ENCODE measurements at regions of chrX and their contacts with region 1.

Region 1: DNA sequence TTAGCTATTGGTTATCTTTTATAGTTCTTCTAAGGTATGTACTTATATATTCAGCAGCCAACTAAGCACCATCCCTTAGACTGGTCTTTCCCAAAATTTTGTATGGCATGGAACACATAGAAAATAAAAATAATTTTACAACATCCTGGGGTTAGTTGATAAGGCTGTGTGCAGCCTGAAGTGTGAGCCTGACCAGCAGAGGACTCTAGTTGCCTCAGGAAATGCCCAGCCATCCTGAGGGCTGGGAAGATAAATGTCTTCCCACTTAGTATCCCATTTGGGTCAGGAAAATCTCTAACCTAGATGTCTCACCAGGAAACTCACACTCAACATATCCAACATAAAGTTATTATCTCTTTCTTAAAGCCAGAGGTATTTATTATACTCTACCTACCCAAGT is 251.4 kb upstream of the POF1B start:
- DNase-seq: no peak
- H3K4me3 ChIP-seq: no peak overlapping the region
- H3K27ac ChIP-seq: no peak overlapping the region
- H3K4me1 ChIP-seq: no peaks in the 10 kb centered on the region
- H3K27me3 ChIP-seq: no peaks in the 10 kb centered on the region
- CTCF ChIP-seq: no peak

Region 2: DNA sequence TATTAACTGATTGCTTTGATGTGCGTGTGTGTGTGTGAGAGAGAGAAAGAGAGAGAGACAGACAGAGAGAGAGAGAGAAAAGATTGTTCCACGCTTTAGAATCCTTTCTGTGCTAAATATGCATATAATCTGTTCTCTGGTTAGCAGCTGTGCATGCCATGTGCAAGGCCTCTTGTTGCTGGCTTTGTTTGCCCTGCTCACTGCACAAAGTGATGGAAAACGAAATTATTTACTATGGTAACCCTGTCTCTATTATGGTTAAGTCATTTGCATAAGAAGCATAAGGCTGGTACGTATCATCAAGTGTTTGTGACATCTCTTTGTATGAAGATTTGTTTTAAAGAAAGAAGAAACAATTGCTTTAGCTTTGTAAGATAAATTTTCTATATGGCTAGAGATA is 61.2 kb before region 1 on chrX:
- intact Hi-C with region 1: loop called (anchors 10 kb)
- DNase-seq: no peak
- H3K4me3 ChIP-seq: no peak overlapping the region
- H3K27ac ChIP-seq: no peak overlapping the region
- H3K4me1 ChIP-seq: no peaks in the 10 kb centered on the region
- H3K27me3 ChIP-seq: no peaks in the 10 kb centered on the region
- CTCF ChIP-seq: no peak

Region 3: DNA sequence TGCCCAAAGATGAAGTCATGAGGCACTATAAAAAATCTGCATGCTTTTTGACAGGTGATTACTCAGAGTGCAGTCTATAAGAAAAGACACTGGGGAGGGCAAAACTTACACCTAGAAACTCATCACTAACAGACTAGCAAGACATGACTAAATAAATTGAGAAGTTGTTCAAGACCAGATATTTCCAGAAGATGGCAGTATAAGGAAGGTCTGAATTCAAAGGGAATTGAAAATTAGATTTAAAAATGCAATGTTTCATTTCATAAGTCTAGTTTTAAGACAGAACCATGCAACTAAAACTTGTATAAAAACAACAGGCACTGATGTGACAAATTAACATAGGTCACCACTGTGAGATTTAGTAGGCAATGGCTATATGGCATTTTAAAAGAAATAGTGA is 19.0 kb before region 1 on chrX:
- intact Hi-C with region 1: no loop called
- DNase-seq: no peak
- H3K4me3 ChIP-seq: no peak overlapping the region
- H3K27ac ChIP-seq: no peak overlapping the region
- H3K4me1 ChIP-seq: no peaks in the 10 kb centered on the region
- H3K27me3 ChIP-seq: no peaks in the 10 kb centered on the region
- CTCF ChIP-seq: peak in 1 of 3 experiments; percentile 10

Measured in ascending aorta (tissue), 2 donors.